AG04449 (cell line): ENCODE measurements at regions of chr1 and their contacts with region 1.

Region 1: DNA sequence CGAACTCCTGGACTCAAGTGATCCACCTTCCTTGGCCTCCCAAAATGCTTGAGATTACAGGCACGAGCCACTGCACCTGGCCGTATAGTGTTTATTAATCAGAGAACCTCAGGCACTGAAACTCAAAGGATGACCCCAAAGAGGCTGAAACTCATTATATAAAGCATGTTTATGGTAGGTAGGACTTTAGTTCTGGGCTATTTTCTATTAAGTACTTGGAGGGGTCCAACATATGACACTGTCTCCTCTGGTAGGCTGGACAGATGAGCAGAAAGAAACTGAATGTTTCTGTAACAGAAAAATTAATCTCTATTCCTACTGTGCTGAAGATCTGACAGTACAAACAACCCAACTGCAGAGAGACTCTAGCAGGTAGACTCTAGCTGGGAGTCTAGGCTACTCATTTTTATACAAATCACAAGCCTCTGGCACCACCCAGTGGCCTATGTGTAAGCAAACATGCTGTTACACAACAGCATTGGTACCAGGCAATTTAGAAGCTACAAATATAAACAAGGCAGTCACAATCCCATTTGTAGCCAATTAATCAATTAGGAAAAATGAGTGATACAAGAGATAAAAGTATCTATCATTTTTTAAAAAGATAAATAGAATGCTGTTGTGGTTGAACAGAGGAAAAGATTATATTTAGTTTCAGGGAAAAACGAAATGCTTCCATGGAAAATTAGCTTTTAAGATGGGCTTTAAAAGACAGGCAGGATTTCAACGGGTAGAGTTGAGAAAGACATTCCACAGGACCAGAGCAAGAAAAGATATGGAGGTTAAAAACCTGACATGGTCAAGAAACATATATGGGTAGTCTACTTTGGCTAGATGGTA is 10.4 kb downstream of the DCAF8 start:
- DNase-seq: no peak
- H3K4me3 ChIP-seq: no peak overlapping the region
- CTCF ChIP-seq: peak; percentile 54

Region 2: DNA sequence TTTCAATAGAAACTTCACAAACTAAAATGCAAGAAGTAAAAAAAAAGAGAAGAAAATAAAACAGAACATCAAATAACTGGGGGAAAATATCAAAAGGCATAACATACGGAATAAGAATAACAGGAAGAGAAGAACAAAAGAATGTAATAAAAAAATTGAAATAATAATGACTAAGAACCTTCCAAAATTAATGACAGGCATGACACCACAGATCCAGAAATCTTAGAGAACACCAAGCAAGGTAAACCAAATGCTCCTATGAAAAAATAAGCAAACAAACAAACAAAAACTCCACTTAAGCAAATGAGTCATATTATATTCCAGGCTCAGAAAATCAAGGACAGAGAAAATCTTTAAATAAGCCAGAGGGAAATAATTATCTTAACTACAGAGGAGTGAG is 803.7 kb before region 1 on chr1:
- CTCF ChIA-PET with region 1: no interaction called
- POLR2A ChIA-PET with region 1: no interaction called
- DNase-seq: no peak
- H3K4me3 ChIP-seq: no peak overlapping the region
- CTCF ChIP-seq: no peak

Region 3: DNA sequence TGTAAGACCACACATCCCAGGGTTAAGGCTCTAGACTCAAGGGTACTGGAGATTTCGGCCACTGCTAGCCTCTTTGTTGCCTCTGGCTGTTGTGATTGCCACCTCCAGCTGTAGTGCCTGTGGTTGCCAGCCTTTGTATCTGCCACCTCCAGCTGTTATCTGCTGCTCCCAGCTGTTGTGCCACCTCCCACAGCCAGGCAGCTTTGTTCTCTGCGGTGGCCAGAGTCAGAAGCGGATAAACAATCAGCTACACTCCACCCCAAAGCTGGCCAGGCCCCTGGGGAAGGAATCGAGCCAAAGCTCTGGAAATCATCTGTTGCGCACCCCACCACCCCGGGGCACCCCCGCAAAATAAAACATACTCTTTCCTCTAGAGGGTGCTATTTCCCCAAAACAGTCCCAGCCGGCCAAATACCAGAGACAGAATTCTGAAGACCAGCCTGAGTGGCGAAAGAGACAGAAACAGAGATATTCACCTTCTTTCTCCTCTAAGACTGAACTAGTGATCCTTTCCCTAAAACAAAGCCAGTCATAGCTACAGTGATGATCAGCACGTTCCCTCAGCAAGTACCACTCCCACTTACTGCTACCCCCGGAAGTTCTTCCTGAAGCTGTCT is 205.3 kb before region 1 on chr1:
- CTCF ChIA-PET with region 1: interaction called, 15 read pairs
- POLR2A ChIA-PET with region 1: no interaction called
- DNase-seq: no peak
- H3K4me3 ChIP-seq: peak overlapping the region; percentile 15; the same call in 1 of the 2 replicates
- CTCF ChIP-seq: peak; percentile 39

Region 4: DNA sequence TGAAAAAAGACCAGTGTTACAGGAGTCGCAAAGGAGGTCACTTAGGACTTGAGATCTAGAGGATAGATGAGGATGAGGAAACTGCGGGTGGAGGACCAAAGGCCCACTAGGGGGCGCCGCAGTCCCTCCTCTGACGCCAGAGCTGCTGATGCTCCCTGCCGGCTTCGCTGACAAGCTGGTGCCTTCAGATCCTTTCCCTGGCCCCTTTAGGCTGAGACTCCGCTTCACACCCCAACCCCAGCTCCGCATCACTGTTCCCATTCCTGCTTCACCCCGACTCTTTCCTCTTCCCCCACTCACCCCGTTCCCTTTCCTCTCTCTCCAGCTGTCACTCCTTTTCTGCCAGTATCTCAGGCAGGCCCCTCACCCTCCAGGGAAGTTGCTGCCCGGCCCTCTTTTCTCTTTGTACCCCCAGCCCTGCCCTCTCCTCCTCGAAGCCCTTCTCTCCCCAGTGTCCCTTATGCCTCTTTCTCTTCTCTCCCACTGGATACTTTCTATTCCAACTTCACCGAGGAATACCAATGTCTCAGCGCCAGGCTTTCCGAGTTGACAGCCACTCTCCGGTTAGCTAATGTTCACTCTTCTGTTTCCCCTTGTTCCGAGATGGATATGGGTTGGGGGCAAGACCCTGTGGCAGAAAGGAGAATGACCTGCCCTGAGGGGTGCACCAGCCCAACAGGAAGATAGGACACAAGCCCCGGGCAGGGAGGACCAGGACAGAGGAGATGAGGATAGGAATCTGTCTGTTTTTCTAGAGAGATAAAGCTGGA is 166.0 kb before region 1 on chr1:
- CTCF ChIA-PET with region 1: interaction called, 147 read pairs
- POLR2A ChIA-PET with region 1: no interaction called
- DNase-seq: no peak
- H3K4me3 ChIP-seq: no peak overlapping the region
- CTCF ChIP-seq: peak; percentile 91

Region 5: DNA sequence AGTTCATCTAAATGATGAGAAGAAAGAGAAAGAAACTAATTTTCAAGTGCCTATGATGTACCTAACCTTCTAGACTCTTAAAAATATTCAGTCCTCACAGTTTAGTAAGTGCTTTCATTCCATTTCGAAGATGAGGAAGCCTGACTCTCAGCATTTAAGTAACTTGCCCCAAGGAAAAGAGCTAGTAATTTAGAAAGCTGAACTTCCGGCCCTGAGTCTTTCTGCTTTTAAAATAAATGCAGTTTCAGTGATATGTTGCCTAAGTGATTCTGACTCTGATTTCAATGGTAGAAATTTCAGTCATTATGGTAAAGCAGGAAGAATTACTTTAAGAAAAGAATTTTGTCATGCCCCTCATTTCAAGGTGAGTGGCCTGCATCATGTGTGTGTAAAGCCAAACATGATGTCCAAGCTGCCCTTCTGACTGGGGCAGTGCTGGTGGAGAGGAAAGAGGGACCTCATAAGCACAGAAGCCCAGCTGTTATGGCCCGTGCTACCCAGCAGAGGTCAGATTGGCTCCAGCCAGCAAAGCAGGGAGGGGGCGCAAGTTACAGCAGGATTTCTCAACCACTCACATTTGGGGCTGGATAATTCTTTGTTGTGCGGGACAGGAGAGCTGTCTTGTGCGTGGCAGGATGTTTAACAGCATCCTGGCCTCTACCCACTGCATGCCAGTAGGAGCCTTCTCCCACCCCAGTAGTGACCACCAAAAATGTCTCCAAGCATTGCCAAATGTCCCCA is 89.8 kb before region 1 on chr1:
- CTCF ChIA-PET with region 1: interaction called, 12 read pairs
- POLR2A ChIA-PET with region 1: no interaction called
- DNase-seq: no peak
- H3K4me3 ChIP-seq: no peak overlapping the region
- CTCF ChIP-seq: peak; percentile 64

Region 6: DNA sequence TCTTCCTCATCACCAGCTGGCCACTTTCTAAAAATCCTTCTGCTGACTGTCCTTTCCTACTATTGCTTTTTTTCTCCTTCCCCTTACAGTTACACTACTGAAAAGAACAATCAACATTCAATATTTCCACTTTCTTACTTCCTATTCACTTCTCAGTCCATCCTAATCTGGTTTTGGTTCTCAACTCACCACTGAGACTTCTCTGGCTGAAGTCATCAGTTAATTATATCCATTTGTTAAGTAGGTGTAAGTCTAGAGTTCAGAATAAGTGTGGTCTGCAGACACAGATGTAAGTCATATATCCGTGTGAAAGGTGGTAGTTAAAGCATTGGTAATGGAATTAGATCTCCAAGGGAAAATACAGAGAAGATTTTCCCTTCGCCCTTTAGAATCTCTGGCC is 25.3 kb before region 1 on chr1:
- CTCF ChIA-PET with region 1: interaction called, 63 read pairs
- POLR2A ChIA-PET with region 1: no interaction called
- DNase-seq: no peak
- H3K4me3 ChIP-seq: no peak overlapping the region
- CTCF ChIP-seq: no peak

Region 7: GRCh38 chr1:160300173-160300572 is 48.3 kb after region 1 on chr1:
- CTCF ChIA-PET with region 1: no interaction called
- POLR2A ChIA-PET with region 1: no interaction called
- DNase-seq: no peak
- H3K4me3 ChIP-seq: no peak overlapping the region
- CTCF ChIP-seq: no peak

Region 8: DNA sequence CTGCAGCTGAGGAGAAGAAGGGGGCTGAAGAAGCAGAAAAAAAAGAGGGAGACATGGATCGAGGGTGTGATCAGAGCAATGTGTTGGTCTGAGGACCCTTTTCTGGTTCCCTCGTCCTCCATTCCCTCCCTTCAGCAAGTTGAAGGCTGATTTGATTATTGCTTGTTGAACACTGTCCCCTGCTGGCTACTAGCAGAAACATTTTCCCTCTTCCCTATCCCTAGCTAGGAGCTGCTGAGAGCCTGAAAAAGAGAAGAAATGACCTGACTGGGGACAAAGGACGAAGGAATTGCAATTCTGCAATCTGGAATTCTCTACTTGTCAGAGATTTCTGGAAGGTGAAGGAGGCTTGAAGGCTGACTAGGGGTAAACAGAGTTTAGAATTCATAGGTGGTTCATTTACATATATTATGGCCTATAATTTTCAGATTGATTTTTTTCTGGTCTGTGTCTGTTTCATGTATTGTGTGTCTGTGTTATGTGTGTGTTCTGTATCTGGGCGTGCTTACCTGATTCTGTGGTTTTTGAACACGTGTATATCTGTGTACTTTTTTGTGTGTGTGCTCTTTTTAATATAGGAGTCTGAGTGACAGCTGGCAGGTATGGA is 124.7 kb after region 1 on chr1:
- CTCF ChIA-PET with region 1: interaction called, 14 read pairs
- POLR2A ChIA-PET with region 1: no interaction called
- DNase-seq: no peak
- H3K4me3 ChIP-seq: no peak overlapping the region
- CTCF ChIP-seq: peak; percentile 84

Region 9: GRCh38 chr1:160558660-160559380 is 306.9 kb after region 1 on chr1:
- CTCF ChIA-PET with region 1: no interaction called
- POLR2A ChIA-PET with region 1: no interaction called
- DNase-seq: no peak
- H3K4me3 ChIP-seq: no peak overlapping the region
- CTCF ChIP-seq: no peak